WTC11 (cell line): ENCODE measurements at regions of chr6 and their contacts with region 1.

Region 1: DNA sequence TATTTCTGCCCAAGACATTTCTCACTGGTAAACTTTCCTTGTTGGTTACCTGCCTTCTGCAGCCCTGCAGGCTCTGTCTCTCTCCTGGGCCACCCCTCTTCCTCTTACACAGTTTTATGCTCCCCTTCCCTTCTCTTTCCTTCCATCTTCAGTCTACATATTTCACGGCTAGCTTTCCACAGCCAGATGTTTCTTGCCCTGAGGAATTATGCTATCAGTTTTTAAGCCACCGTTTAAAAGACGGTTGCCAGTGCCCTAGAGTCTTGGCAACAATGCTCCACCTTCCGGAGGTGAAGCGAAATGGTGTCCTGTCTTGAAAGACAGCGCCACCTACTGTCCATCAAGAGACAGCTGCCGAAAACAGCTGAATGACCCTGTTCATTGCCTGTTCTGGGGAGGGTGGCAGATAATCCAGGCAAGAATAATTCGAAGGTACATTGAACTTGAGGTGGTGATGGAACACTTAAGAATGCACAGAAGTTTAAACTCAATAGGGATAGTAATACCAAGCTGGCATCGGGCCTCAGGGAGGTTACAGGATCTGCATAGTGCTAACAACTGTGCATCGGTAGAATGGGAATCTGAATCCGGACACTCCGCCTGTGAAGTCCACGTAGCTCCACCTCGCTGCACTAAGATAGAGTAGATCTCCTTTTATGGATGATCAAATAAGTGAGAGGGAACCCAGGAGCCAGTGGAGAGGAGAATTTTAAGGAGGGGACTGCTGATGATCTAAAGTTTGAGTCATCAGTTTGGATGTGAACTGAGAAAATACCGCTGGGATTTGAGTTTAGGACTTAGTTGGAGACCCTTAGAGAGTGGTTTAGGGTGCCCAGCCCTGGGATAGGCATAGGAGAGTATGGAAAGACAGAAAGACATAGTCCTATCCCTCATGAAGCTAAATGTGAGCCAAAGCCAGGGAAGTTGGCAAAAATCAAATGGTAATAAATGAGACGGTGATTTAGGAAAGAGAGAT is 4.8 kb upstream of the TRIM40 start:
- DNase-seq: peak; percentile 58
- ATAC-seq: peak; percentile 62
- H3K4me3 Mint-ChIP-seq: peak overlapping the region; percentile 37; the same call in 1 of the 2 replicates
- H3K27ac Mint-ChIP-seq: no peak overlapping the region
- H3K4me1 Mint-ChIP-seq: peaks cover 17% of the 10 kb centered on the region
- H3K27me3 Mint-ChIP-seq: peaks cover 69% of the 10 kb centered on the region
- CTCF ChIP-seq: peak; percentile 94

Region 2: GRCh38 chr6:30075161-30075986 is 55.8 kb before region 1 on chr6 and contains the start of gene RNF39:
- CTCF ChIA-PET with region 1: interaction called, 12 read pairs
- POLR2A ChIA-PET with region 1: no interaction called
- DNase-seq: peak; percentile 83
- ATAC-seq: peak; percentile 68
- H3K4me3 Mint-ChIP-seq: peak within 1 kb of the TSS; percentile 96
- H3K27ac Mint-ChIP-seq: peak within 1 kb of the TSS; percentile 47
- H3K4me1 Mint-ChIP-seq: peaks cover 32% of the 10 kb centered on the region
- H3K27me3 Mint-ChIP-seq: peaks cover 94% of the 10 kb centered on the region
- CTCF ChIP-seq: peak; percentile 73
- total RNA-seq, gene RNF39: 4.2 to 5.1 TPM (median 4.5 TPM) in 3 replicates

Region 3: GRCh38 chr6:30116724-30117123 is 14.5 kb before region 1 on chr6:
- CTCF ChIA-PET with region 1: interaction called, 19 read pairs
- POLR2A ChIA-PET with region 1: no interaction called
- DNase-seq: no peak
- ATAC-seq: no peak
- H3K4me3 Mint-ChIP-seq: no peak overlapping the region
- H3K27ac Mint-ChIP-seq: no peak overlapping the region
- H3K4me1 Mint-ChIP-seq: no peaks in the 10 kb centered on the region
- H3K27me3 Mint-ChIP-seq: peaks cover 51% of the 10 kb centered on the region
- CTCF ChIP-seq: no peak

Region 4: DNA sequence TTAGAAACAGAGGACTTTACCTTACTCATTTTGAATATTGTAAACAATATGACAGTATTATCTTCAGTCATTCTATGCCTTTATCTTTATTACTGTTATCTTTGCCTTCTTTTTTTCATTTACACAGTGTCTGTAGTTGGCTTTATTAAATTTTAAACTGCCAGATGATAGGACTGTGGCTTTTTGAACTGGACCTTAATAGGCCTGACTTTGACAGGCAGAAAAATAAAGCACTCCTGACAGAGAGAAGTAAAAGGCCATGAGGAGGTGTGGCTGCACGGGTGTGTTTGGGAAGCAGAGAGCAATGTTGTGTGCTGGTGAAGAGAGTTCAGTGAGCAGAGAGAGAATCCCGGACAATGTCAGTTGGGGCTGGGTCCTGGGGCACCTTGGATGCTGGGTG is 12.6 kb after region 1 on chr6:
- CTCF ChIA-PET with region 1: interaction called, 11 read pairs
- POLR2A ChIA-PET with region 1: no interaction called
- DNase-seq: no peak
- ATAC-seq: no peak
- H3K4me3 Mint-ChIP-seq: no peak overlapping the region
- H3K27ac Mint-ChIP-seq: no peak overlapping the region
- H3K4me1 Mint-ChIP-seq: peaks cover 4% of the 10 kb centered on the region
- H3K27me3 Mint-ChIP-seq: peaks cover 31% of the 10 kb centered on the region
- CTCF ChIP-seq: no peak

Region 5: DNA sequence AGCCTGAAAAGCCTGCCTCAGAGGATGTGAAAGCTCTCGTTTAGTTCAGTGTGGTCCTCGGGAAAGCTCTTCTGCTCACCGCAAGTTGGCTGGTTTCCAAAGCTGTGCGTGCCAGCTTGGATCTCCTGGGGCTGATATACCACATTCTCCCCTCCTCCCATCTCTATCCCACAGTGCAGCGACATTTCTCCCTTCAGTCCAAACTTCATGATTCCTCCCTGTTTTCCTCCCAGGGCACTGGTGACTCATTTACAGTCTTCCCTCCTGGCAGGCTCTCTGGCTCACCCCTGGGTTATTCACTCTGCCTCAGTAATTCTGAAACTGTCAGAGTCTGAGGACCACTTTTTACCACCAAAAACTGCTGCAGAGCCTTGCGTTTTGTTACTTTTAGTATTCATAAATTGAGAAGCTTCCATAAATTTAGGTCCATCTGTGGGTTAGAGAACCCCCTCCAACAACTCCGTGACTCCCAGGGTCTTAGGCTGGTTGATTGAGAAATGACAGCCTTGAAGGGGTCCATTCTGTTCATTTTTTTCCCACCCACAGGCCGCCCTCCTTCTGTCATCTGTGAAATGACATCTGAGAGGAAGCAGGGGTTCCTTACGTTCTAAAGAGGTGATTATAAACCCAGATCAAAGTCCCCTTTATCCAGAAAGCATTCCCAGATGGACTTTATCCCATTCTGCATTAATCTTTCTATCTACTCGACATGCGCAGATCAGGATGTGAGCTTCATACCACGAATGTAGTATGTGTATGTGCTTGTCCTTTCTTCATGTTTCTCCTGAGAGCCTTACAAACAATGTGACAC is 23.7 kb after region 1 on chr6:
- CTCF ChIA-PET with region 1: interaction called, 13 read pairs
- POLR2A ChIA-PET with region 1: no interaction called
- DNase-seq: no peak
- ATAC-seq: no peak
- H3K4me3 Mint-ChIP-seq: no peak overlapping the region
- H3K27ac Mint-ChIP-seq: no peak overlapping the region
- H3K4me1 Mint-ChIP-seq: no peaks in the 10 kb centered on the region
- H3K27me3 Mint-ChIP-seq: peaks cover 36% of the 10 kb centered on the region
- CTCF ChIP-seq: no peak

Region 6: GRCh38 chr6:30311101-30311500 is 179.9 kb after region 1 on chr6:
- CTCF ChIA-PET with region 1: no interaction called
- POLR2A ChIA-PET with region 1: no interaction called
- DNase-seq: no peak
- ATAC-seq: peak; percentile 39; the same call in 1 of the 2 replicates
- H3K4me3 Mint-ChIP-seq: no peak overlapping the region
- H3K27ac Mint-ChIP-seq: no peak overlapping the region
- H3K4me1 Mint-ChIP-seq: peaks cover 16% of the 10 kb centered on the region
- H3K27me3 Mint-ChIP-seq: no peaks in the 10 kb centered on the region
- CTCF ChIP-seq: no peak

Region 7: GRCh38 chr6:30463651-30464618 is 332.8 kb after region 1 on chr6:
- CTCF ChIA-PET with region 1: no interaction called
- POLR2A ChIA-PET with region 1: no interaction called
- DNase-seq: peak; percentile 38
- ATAC-seq: peak; percentile 15; the same call in 1 of the 2 replicates
- H3K4me3 Mint-ChIP-seq: no peak overlapping the region
- H3K27ac Mint-ChIP-seq: no peak overlapping the region
- H3K4me1 Mint-ChIP-seq: peaks cover 6% of the 10 kb centered on the region; the same call in 1 of the 2 replicates
- H3K27me3 Mint-ChIP-seq: peaks cover 97% of the 10 kb centered on the region
- CTCF ChIP-seq: no peak

Region 8: GRCh38 chr6:30686908-30687658 is 555.9 kb after region 1 on chr6:
- CTCF ChIA-PET with region 1: no interaction called
- POLR2A ChIA-PET with region 1: no interaction called
- DNase-seq: peak; percentile 92
- ATAC-seq: peak; percentile 43
- H3K4me3 Mint-ChIP-seq: peak overlapping the region; percentile 80
- H3K27ac Mint-ChIP-seq: 0 out of 2 replicates have a peak overlapping the region, but pooled peaks have one; percentile 39
- H3K4me1 Mint-ChIP-seq: peaks cover 75% of the 10 kb centered on the region
- H3K27me3 Mint-ChIP-seq: no peaks in the 10 kb centered on the region
- CTCF ChIP-seq: no peak